Dorsolateral prefrontal cortex (tissue), 120 donors: ENCODE measurements at regions of chr14 and their contacts with region 1.

Region 1: GRCh38 chr14:21455911-21456667 is at the start of gene CHD8:
- DNase-seq: peak; percentile 98 to 100 (median 100)
- H3K4me3 ChIP-seq: peak within 1 kb of the TSS; percentile 67 to 99 (median 89)
- H3K27ac ChIP-seq: peak within 1 kb of the TSS; percentile 87 to 99 (median 97)
- H3K27me3 ChIP-seq: no peaks in the 10 kb centered on the region
- CTCF ChIP-seq: peak; percentile 52 to 95 (median 80)
- total RNA-seq, gene CHD8: 81.7 to 123 (median 99.9) TPM

Region 2: DNA sequence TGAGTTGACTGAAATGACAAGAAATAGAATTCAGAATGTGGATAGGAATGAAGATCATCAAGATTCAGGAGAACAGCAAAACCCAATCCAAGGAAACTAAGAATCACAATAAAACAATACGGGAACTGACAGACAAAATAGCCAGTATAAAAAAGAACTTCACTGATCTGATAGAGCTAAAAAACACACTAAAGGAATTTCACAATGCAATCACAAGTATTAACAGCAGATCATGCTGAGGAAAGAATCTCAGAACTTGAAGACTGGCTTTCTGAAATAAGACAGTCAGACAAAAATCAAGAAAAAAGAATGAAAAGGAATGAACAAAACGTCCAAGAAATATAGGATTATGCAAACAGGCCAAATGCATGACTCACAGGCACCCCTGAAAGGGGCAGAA is 285.0 kb before region 1 on chr14:
- intact Hi-C with region 1: no loop called
- DNase-seq: no peak
- H3K4me3 ChIP-seq: no peak overlapping the region
- H3K27ac ChIP-seq: no peak overlapping the region
- H3K27me3 ChIP-seq: peaks cover 0 to 10% (median 0%) of the 10 kb centered on the region in 45 donors
- CTCF ChIP-seq: no peak

Region 3: GRCh38 chr14:21437063-21437901 is 18.8 kb before region 1 on chr14:
- intact Hi-C with region 1: loop called (anchors 1 kb)
- DNase-seq: peak; percentile 96 to 100 (median 99)
- H3K4me3 ChIP-seq: peak overlapping the region; percentile 51 to 98 (median 87)
- H3K27ac ChIP-seq: peak overlapping the region; percentile 19 to 96 (median 90)
- H3K27me3 ChIP-seq: no peaks in the 10 kb centered on the region
- CTCF ChIP-seq: peak in 19 of 56 donors; percentile 7 to 46 (median 25)

Region 4: GRCh38 chr14:21476925-21477681 is 21.0 kb after region 1 on chr14 and contains the starts of genes RAB2B and TOX4:
- intact Hi-C with region 1: loop called (anchors 2 kb)
- DNase-seq: peak; percentile 91 to 99 (median 98)
- H3K4me3 ChIP-seq: peak within 1 kb of the TSS; percentile 62 to 99 (median 91)
- H3K27ac ChIP-seq: peak within 1 kb of the TSS; percentile 5 to 92 (median 84)
- H3K27me3 ChIP-seq: no peaks in the 10 kb centered on the region
- CTCF ChIP-seq: peak; percentile 74 to 98 (median 94)
- total RNA-seq, gene RAB2B: 27.7 to 58.6 (median 42.6) TPM
- total RNA-seq, gene TOX4: 64.5 to 139 (median 90.9) TPM

Region 5: GRCh38 chr14:21510735-21511657 is 54.9 kb after region 1 on chr14 and contains the start of gene METTL3:
- intact Hi-C with region 1: loop called in 1 of 2 experiments (anchors 2 kb)
- DNase-seq: peak; percentile 90 to 99 (median 98)
- H3K4me3 ChIP-seq: peak within 1 kb of the TSS; percentile 65 to 100 (median 90)
- H3K27ac ChIP-seq: peak within 1 kb of the TSS in 52 of 59 donors; percentile 21 to 91 (median 74)
- H3K27me3 ChIP-seq: no peaks in the 10 kb centered on the region
- CTCF ChIP-seq: peak in 36 of 56 donors; percentile 4 to 54 (median 28)
- total RNA-seq, gene METTL3: 30.0 to 59.4 (median 43.7) TPM

Region 6: GRCh38 chr14:21557084-21557901 is 101.2 kb after region 1 on chr14:
- intact Hi-C with region 1: loop called in 1 of 2 experiments (anchors 2 kb)
- DNase-seq: peak in 7 of 10 donors; percentile 49 to 89 (median 57)
- H3K4me3 ChIP-seq: peak overlapping the region; percentile 20 to 65 (median 48)
- H3K27ac ChIP-seq: peak overlapping the region in 48 of 59 donors; percentile 11 to 85 (median 62)
- H3K27me3 ChIP-seq: no peaks in the 10 kb centered on the region
- CTCF ChIP-seq: peak; percentile 69 to 96 (median 84)